ENCODE measurements at regions of chr16 and their contacts with region 1.

Region 1: DNA sequence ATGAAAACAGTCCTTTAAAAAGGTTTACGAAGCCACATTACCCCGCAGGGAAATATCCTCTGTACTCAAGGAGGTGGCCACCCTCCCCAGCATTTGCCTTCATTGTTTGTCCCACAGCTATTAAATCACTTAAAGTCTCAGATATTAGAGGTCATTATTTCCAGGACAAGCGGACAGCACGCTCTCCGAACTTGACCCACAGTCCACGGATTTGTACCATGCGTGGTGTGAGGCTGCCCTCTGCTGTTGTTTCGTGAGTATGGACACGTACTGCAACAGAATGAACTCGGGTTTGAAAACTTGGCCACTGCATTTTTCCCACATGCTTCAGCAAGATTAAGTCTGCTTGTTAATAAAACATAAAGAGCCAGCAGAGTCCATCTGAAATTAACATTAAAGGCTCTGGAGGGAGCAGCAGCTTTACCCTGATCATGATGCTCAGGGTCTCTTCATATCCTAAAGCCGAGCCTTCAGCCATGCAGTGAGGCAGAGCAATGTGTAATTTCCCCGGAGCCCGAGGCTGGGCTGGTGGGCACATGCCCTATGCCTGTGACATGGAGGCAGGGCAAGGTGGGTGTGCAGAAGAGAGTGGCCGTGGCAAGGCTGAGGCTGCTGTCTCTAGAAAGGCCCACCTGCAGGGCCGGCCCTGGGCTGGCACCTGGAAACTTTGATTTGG is 19.7 kb downstream of the MEAK7 start:
- DNase-seq: no peak
- H3K4me3 Mint-ChIP-seq: no peak overlapping the region
- H3K27ac Mint-ChIP-seq: no peak overlapping the region
- H3K4me1 Mint-ChIP-seq: peaks cover 6% of the 10 kb centered on the region
- H3K27me3 Mint-ChIP-seq: no peaks in the 10 kb centered on the region

Region 2: DNA sequence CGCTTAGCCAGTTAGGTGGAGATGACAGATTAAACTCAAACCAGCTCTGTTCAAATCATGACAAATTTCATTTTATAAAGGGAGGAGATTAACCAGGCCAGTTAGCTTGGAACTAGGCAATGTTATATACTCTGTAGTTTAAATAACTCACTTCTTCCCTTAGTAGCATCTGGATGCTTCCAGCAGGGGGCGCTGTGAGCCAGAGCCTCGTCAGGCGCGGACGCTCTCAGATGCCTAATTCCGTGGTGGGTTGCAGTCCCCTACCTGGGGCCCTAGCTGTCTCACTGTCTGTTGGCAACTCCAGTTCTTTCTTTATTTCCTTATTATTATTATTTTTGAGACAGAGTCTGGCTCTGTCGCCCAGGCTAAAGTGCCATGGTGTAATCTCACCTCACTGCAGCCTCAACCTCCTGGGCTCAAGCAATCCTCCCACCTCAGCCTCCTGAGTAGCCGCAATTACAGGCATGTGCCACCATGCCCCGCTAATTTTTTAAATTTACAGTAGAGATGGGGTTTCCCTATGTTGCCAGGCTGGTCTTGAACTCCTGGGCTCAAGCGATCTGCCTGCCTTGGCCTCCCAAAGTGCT is 207.4 kb before region 1 on chr16:
- CTCF ChIA-PET with region 1: interaction called, 23 read pairs
- DNase-seq: peak; percentile 82
- H3K4me3 Mint-ChIP-seq: no peak overlapping the region
- H3K27ac Mint-ChIP-seq: no peak overlapping the region
- H3K4me1 Mint-ChIP-seq: no peaks in the 10 kb centered on the region
- H3K27me3 Mint-ChIP-seq: peaks cover 16% of the 10 kb centered on the region

Measured in activated naive CD4-positive, alpha-beta T cell treated with anti-CD3 and anti-CD28 coated beads, Interleukin-2, amount 10 ng/mL, durations not matched to agents 7 days and 5 days (primary cell).